A549 (cell line): ENCODE measurements at regions of chr19 and their contacts with region 1.

Region 1: GRCh38 chr19:10717356-10718204 is at the start of gene DNM2:
- DNase-seq: peak; percentile 95 to 100
- ATAC-seq: peak; percentile 94 to 96
- H3K4me3 ChIP-seq: peak within 1 kb of the TSS; percentile 95
- H3K27ac ChIP-seq: peak within 1 kb of the TSS; percentile 94 to 98
- H3K4me1 ChIP-seq: peaks cover 11% of the 10 kb centered on the region; the same call in 2 of the 3 replicates
- CTCF ChIP-seq: peak; percentile 76
- EP300 ChIP-seq: no peak
- POLR2A ChIP-seq: peak; percentile 61
- RAD21 ChIP-seq: peak; percentile 75 to 77
- polyA plus RNA-seq, gene DNM2: 32.9 and 52.4 TPM in 2 replicates

Region 2: DNA sequence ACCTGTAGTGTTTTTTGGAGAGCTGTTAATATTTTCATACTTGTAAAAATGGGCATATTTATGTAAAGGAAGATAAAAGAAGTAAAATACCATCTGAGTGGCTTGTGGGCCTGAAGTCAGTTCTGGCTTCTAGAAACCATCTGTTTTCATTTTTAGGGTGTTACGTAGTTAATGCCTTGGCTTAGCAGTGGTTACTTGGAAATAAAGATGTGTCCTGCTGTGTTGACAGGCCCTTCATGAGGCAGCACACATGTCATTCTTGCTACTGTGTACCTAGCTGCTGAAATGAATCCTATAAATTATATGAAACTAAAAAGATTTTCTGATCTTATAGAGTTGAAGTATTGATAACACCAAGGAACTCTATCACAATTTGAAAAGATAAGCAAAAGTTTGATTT is 47.4 kb before region 1 on chr19:
- CTCF ChIA-PET with region 1: no interaction called
- POLR2A ChIA-PET with region 1: no interaction called
- DNase-seq: no peak
- ATAC-seq: no peak
- H3K4me3 ChIP-seq: no peak overlapping the region
- H3K27ac ChIP-seq: no peak overlapping the region
- H3K4me1 ChIP-seq: peaks cover 17% of the 10 kb centered on the region; the same call in 2 of the 3 replicates
- CTCF ChIP-seq: no peak
- EP300 ChIP-seq: no peak
- POLR2A ChIP-seq: no peak
- RAD21 ChIP-seq: no peak

Region 3: GRCh38 chr19:10695401-10696398 is 21.9 kb before region 1 on chr19:
- CTCF ChIA-PET with region 1: interaction called, 90 read pairs
- POLR2A ChIA-PET with region 1: no interaction called
- DNase-seq: peak; percentile 78 to 92
- ATAC-seq: peak; percentile 92
- H3K4me3 ChIP-seq: peak overlapping the region; percentile 18; the same call in 1 of the 3 replicates
- H3K27ac ChIP-seq: no peak overlapping the region
- H3K4me1 ChIP-seq: peaks cover 9% of the 10 kb centered on the region; the same call in 1 of the 3 replicates
- CTCF ChIP-seq: no peak
- EP300 ChIP-seq: no peak
- POLR2A ChIP-seq: no peak
- RAD21 ChIP-seq: no peak

Region 4: GRCh38 chr19:10769533-10770491 is 52.2 kb after region 1 on chr19:
- CTCF ChIA-PET with region 1: interaction called, 10 read pairs
- POLR2A ChIA-PET with region 1: interaction called, 3 read pairs
- DNase-seq: peak in 1 of 2 experiments; percentile 48
- ATAC-seq: peak; percentile 57 to 68; a peak in 4 of 6 replicates
- H3K4me3 ChIP-seq: no peak overlapping the region
- H3K27ac ChIP-seq: peak overlapping the region; percentile 54 to 61; a peak in 5 of 6 replicates
- H3K4me1 ChIP-seq: peaks cover 51% of the 10 kb centered on the region
- CTCF ChIP-seq: peak; percentile 26; the same call in 2 of the 3 replicates
- EP300 ChIP-seq: no peak
- POLR2A ChIP-seq: no peak
- RAD21 ChIP-seq: peak; percentile 40 to 63

Region 5: DNA sequence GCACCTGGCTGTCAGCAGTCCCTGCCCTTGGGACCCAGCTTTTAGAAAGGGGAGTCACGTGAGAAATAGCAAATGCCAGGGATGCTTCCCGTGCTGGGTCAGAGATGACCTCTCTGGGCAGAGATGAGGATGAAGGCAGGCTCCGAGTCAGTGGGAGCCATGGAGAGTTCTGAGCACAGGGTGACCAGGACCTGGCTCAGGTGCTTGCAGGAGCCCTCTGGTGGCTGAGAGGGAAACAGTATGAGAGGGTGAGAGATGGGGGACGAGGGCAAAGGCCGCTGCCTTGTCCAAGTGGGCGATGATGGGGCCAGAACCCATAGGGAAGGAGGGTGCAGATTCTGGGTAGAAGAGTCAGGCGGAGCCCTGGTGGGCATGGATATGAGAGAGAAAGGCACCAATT is 102.6 kb after region 1 on chr19:
- CTCF ChIA-PET with region 1: interaction called, 10 read pairs
- POLR2A ChIA-PET with region 1: no interaction called
- DNase-seq: peak in 1 of 2 experiments; percentile 13
- ATAC-seq: peak; percentile 58 to 74; a peak in 4 of 6 replicates
- H3K4me3 ChIP-seq: no peak overlapping the region
- H3K27ac ChIP-seq: no peak overlapping the region
- H3K4me1 ChIP-seq: no peaks in the 10 kb centered on the region
- CTCF ChIP-seq: no peak
- EP300 ChIP-seq: no peak
- POLR2A ChIP-seq: no peak
- RAD21 ChIP-seq: peak in 1 of 2 experiments; percentile 20; a peak in 1 of 5 replicates

Region 6: GRCh38 chr19:10828981-10829821 is 111.6 kb after region 1 on chr19:
- CTCF ChIA-PET with region 1: interaction called, 21 read pairs
- POLR2A ChIA-PET with region 1: interaction called, 3 read pairs
- DNase-seq: no peak
- ATAC-seq: peak; percentile 67 to 76
- H3K4me3 ChIP-seq: no peak overlapping the region
- H3K27ac ChIP-seq: no peak overlapping the region
- H3K4me1 ChIP-seq: no peaks in the 10 kb centered on the region
- CTCF ChIP-seq: peak; percentile 15; the same call in 1 of the 3 replicates
- EP300 ChIP-seq: no peak
- POLR2A ChIP-seq: no peak
- RAD21 ChIP-seq: peak in 1 of 2 experiments; percentile 34; a peak in 2 of 5 replicates

Region 7: DNA sequence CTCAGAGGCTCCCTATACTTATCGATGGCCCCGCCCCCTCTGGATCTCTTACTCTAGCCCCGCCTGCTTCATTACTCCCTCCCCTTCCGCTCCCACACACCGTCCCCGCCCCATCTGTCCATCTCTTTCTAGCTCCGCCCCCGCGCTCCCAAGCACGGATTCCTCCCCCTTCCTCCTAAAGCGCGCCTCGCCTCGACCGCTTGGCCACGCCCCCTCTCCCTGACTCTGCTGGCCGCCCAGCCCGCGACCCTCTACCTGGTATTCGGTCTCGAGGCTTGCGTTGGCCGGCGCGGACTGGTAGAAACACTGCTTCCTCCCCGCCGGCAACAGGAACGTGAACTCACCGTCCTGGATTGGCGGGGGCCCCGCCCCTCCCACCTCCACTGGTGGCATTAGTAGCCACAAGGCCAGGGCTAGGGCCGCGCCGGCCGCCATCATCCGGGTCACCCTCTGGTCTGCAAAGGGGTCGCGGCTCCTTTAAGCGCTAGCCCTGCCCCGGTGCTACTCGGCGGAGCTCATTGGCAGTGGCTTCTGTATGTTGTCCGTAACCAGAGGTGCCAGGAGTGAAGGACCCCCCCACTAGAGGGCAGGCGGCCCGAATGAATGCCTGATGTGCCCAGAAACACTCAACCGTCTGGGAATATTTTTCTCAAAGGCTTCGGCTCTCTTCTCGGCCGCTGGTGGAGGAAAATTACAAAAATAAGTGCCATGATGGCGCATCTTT is 118.3 kb after region 1 on chr19 and contains the start of gene TMED1:
- CTCF ChIA-PET with region 1: interaction called, 12 read pairs
- POLR2A ChIA-PET with region 1: interaction called, 23 read pairs
- DNase-seq: peak; percentile 91 to 99
- ATAC-seq: peak; percentile 94 to 96
- H3K4me3 ChIP-seq: peak within 1 kb of the TSS; percentile 51
- H3K27ac ChIP-seq: peak within 1 kb of the TSS; percentile 89 to 99
- H3K4me1 ChIP-seq: peaks cover 8% of the 10 kb centered on the region; the same call in 2 of the 3 replicates
- CTCF ChIP-seq: no peak
- EP300 ChIP-seq: no peak
- POLR2A ChIP-seq: peak; percentile 46
- RAD21 ChIP-seq: peak in 1 of 2 experiments; percentile 15; a peak in 1 of 5 replicates
- polyA plus RNA-seq, gene TMED1: 29.3 and 29.9 TPM in 2 replicates

Region 8: DNA sequence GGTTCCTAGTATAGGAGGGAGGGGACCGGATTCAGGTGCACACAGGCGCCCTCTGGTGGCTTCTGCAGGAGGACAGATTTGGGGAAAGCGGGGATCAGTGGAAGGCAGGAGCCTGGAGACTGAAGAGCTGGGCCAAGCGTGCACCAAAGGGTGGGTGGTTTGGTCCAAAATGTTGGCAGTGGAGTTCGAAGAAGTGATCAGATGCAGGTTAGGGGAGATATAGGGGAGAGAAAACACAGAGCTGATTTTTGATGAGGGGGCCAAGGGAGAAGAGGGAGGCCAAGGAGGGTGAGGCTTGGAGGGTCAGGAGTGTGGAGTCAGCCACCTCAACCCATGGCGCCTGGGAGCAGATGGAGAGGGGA is 146.9 kb after region 1 on chr19:
- CTCF ChIA-PET with region 1: interaction called, 41 read pairs
- POLR2A ChIA-PET with region 1: no interaction called
- DNase-seq: peak; percentile 65 to 95
- ATAC-seq: peak; percentile 96 to 97
- H3K4me3 ChIP-seq: no peak overlapping the region
- H3K27ac ChIP-seq: peak overlapping the region in 1 of 2 experiments; percentile 76; a peak in 3 of 6 replicates
- H3K4me1 ChIP-seq: no peaks in the 10 kb centered on the region
- CTCF ChIP-seq: peak; percentile 71
- EP300 ChIP-seq: no peak
- POLR2A ChIP-seq: no peak
- RAD21 ChIP-seq: peak; percentile 42 to 55; a peak in 3 of 5 replicates

Region 9: GRCh38 chr19:10952809-10953208 is 235.2 kb after region 1 on chr19:
- CTCF ChIA-PET with region 1: no interaction called
- POLR2A ChIA-PET with region 1: no interaction called
- DNase-seq: no peak
- ATAC-seq: no peak
- H3K4me3 ChIP-seq: no peak overlapping the region
- H3K27ac ChIP-seq: peak overlapping the region in 1 of 2 experiments; percentile 57; a peak in 2 of 6 replicates
- H3K4me1 ChIP-seq: peaks cover 14% of the 10 kb centered on the region
- CTCF ChIP-seq: no peak
- EP300 ChIP-seq: no peak
- POLR2A ChIP-seq: no peak
- RAD21 ChIP-seq: no peak